ENCODE measurements at regions of chr7 and their contacts with region 1.

Region 1: GRCh38 chr7:55255496-55256435 is 109.4 kb upstream of the LANCL2 start:
- DNase-seq: peak; percentile 86 to 94 (median 93)
- ATAC-seq: peak; percentile 95 to 96
- H3K4me3 ChIP-seq: peak overlapping the region; percentile 44
- H3K27ac ChIP-seq: no peak overlapping the region
- H3K4me1 ChIP-seq: no peaks in the 10 kb centered on the region
- H3K27me3 ChIP-seq: no peaks in the 10 kb centered on the region

Region 2: GRCh38 chr7:54773472-54774399 is 482.0 kb before region 1 on chr7:
- intact Hi-C with region 1: loop called (anchors 2 to 5 kb)
- DNase-seq: peak; percentile 82 to 92 (median 88)
- ATAC-seq: peak; percentile 94 to 95
- H3K4me3 ChIP-seq: peak overlapping the region; percentile 59
- H3K27ac ChIP-seq: no peak overlapping the region
- H3K4me1 ChIP-seq: no peaks in the 10 kb centered on the region
- H3K27me3 ChIP-seq: no peaks in the 10 kb centered on the region

Region 3: GRCh38 chr7:54778696-54779540 is 476.8 kb before region 1 on chr7:
- intact Hi-C with region 1: loop called (anchors 2 to 5 kb)
- DNase-seq: no peak
- ATAC-seq: no peak
- H3K4me3 ChIP-seq: no peak overlapping the region
- H3K27ac ChIP-seq: no peak overlapping the region
- H3K4me1 ChIP-seq: no peaks in the 10 kb centered on the region
- H3K27me3 ChIP-seq: no peaks in the 10 kb centered on the region

Region 4: GRCh38 chr7:54788664-54789063 is 467.1 kb before region 1 on chr7:
- intact Hi-C with region 1: loop called (anchors 2 to 5 kb)
- DNase-seq: no peak
- ATAC-seq: peak; percentile 81 to 90
- H3K4me3 ChIP-seq: no peak overlapping the region
- H3K27ac ChIP-seq: no peak overlapping the region
- H3K4me1 ChIP-seq: no peaks in the 10 kb centered on the region
- H3K27me3 ChIP-seq: no peaks in the 10 kb centered on the region

Region 5: GRCh38 chr7:55018361-55019190 is 237.2 kb before region 1 on chr7 and contains the start of gene EGFR:
- intact Hi-C with region 1: loop called in 1 of 4 experiments (anchors 10 kb)
- DNase-seq: peak; percentile 87 to 94 (median 93)
- ATAC-seq: peak; percentile 93
- H3K4me3 ChIP-seq: peak within 1 kb of the TSS; percentile 82
- H3K27ac ChIP-seq: peak within 1 kb of the TSS; percentile 71
- H3K4me1 ChIP-seq: peaks cover 6% of the 10 kb centered on the region
- H3K27me3 ChIP-seq: no peaks in the 10 kb centered on the region
- total RNA-seq, gene EGFR: 13.3 to 21.8 (median 15.2) TPM

Region 6: GRCh38 chr7:55140221-55140940 is 115.4 kb before region 1 on chr7:
- intact Hi-C with region 1: loop called in 1 of 4 experiments (anchors 10 kb)
- DNase-seq: peak; percentile 56 to 80 (median 76)
- ATAC-seq: peak; percentile 82 to 89
- H3K4me3 ChIP-seq: no peak overlapping the region
- H3K27ac ChIP-seq: peak overlapping the region; percentile 45
- H3K4me1 ChIP-seq: peaks cover 4% of the 10 kb centered on the region
- H3K27me3 ChIP-seq: no peaks in the 10 kb centered on the region

Region 7: GRCh38 chr7:55192718-55193117 is 63.0 kb before region 1 on chr7:
- intact Hi-C with region 1: no loop called
- DNase-seq: no peak
- ATAC-seq: peak in 1 of 2 donors; percentile 28
- H3K4me3 ChIP-seq: no peak overlapping the region
- H3K27ac ChIP-seq: peak overlapping the region; percentile 1
- H3K4me1 ChIP-seq: peaks cover 8% of the 10 kb centered on the region
- H3K27me3 ChIP-seq: no peaks in the 10 kb centered on the region